ENCODE measurements at regions of chr2 and their contacts with region 1.

Region 1: DNA sequence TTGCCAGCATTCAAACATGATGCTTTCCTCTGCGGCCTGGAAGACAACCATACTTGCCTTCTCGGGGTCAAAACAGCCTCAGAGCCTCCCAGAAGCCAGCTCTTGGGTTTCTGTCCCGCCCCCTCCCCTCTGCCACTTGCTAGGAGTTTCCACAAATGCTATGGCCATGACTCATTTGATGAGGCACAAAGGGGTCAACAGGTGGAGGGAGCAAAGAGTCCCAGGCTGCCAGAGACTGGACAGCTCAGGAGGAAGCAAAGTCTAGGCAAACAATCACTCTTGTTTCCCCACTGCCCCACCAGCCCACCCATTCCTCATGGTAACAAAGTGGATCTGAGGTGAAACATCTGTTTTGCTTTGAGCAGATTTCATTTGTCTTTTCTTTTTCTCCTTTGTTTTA is 551.1 kb downstream of the TNS1 start:
- DNase-seq: no peak
- H3K4me3 ChIP-seq: no peak overlapping the region
- H3K27ac ChIP-seq: no peak overlapping the region
- H3K4me1 ChIP-seq: no peaks in the 10 kb centered on the region
- H3K27me3 ChIP-seq: no peaks in the 10 kb centered on the region
- CTCF ChIP-seq: no peak
- EP300 ChIP-seq: no peak
- POLR2A ChIP-seq: no peak

Region 2: DNA sequence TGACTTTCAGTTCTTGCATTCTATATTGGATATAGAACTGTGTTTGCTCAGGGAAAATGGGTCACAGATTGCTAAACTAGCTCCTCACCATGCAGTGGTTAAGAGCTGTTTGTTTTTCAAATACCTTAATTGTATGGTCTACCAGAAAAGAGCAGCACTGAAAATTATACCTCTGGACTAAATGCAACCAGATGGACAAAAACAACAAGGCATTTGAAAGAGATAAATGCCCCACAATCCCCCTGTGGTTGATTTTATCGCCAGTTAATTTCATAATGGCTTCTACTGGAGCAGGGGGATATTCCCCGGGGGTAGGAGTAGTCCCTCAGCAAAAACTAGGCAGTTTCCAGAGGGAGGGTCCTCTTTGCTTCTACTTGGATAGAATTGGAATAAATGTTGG is 323.9 kb before region 1 on chr2:
- in situ Hi-C with region 1: no loop called
- intact Hi-C with region 1: no loop called
- DNase-seq: no peak
- H3K4me3 ChIP-seq: no peak overlapping the region
- H3K27ac ChIP-seq: no peak overlapping the region
- H3K4me1 ChIP-seq: no peaks in the 10 kb centered on the region
- H3K27me3 ChIP-seq: no peaks in the 10 kb centered on the region
- CTCF ChIP-seq: no peak
- EP300 ChIP-seq: no peak
- POLR2A ChIP-seq: no peak

Region 3: GRCh38 chr2:217440000-217440399 is 11.7 kb before region 1 on chr2:
- in situ Hi-C with region 1: no loop called
- intact Hi-C with region 1: loop called (anchors 1 kb)
- DNase-seq: no peak
- H3K4me3 ChIP-seq: no peak overlapping the region
- H3K27ac ChIP-seq: peak overlapping the region; percentile 28 to 50 (median 38)
- H3K4me1 ChIP-seq: peaks cover 3 to 26% (median 13%) of the 10 kb centered on the region in 4 donors
- H3K27me3 ChIP-seq: no peaks in the 10 kb centered on the region
- CTCF ChIP-seq: no peak
- EP300 ChIP-seq: no peak
- POLR2A ChIP-seq: no peak

Measured in transverse colon (tissue), 4 donors.